AG04450 (cell line): ENCODE measurements at regions of chr16 and their contacts with region 1.

Region 1: GRCh38 chr16:23435500-23435899 is 17.5 kb downstream of the COG7 start:
- DNase-seq: no peak
- H3K4me3 ChIP-seq: no peak overlapping the region
- H3K27ac ChIP-seq: no peak overlapping the region
- H3K27me3 ChIP-seq: no peaks in the 10 kb centered on the region
- CTCF ChIP-seq: peak; percentile 91

Region 2: DNA sequence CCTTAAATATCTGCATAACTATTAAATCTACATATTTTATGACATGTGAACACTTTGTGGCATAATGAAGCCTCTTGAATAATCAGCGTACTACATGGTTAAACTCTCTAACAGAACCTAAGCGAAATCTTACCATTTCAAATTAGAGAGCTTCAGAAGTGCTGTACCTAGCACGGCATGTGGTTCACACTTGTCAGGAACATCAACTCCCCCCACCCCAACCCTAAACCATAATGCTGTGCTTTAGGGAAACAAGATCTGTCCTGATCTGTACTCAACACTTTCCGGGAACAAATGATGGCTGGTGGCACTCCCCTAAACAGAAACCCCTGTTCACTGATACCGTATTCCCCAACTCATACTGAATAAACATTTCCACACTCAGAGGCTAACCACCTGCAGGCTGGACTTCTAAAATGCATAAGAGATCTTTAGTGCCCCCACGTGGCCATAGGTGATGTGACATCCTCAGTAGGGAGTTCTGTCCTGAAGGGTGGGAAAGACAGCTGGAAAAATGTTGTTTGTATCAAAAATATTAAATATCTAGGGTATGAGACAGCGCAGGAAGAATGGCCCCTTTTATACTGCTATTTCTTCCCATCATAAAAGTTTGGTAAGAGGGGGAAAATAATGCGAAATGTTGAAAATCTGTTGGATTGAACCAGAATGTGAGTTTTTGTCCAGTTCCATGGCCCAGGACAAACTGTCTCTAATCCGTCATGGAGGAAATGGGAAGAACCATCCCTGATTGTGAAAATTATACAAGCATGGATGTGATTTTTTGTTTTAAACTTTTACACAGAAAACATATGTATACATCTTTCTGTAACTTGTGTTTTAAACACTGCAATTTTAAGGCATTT is 374.8 kb before region 1 on chr16:
- CTCF ChIA-PET with region 1: interaction called, 23 read pairs
- POLR2A ChIA-PET with region 1: no interaction called
- DNase-seq: peak; percentile 47
- H3K4me3 ChIP-seq: no peak overlapping the region
- H3K27ac ChIP-seq: no peak overlapping the region
- H3K27me3 ChIP-seq: no peaks in the 10 kb centered on the region
- CTCF ChIP-seq: peak; percentile 88

Region 3: DNA sequence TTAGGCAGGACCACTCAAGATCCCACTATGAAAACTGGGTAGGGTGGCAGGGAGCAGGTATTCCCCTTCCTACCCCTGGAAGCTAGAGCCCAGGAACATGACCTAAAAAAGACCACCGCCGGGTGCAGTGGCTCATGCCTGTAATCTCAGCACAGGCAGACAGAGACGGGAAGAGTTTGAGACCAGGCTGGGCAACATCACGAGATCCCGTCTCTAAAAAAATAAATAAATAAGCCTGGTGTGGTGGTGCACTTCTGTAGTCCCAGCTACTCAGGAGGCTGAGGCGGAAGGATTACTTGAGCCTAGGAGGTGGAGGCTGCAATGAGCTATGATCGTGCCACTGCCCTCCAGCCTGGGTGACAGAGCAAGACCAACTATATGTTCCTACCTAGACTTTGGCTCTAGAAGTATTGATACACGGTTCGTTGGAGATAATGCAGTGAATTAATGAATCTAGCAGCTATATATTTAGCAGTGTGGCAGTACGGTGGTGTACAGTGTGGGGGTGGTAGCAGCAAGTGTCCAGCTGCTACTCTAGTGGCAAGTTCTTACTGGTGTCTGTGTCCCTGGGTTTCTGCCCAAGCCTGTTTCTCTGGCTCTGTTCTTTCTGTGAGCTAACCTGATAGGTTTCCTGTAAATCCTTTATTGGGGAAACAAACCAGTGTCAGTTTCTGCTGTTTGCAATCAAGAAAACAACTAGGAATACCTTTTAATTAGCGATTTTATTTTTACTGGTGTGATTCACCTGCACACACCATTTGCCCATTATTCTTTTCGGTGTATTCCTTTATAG is 282.9 kb before region 1 on chr16:
- CTCF ChIA-PET with region 1: interaction called, 10 read pairs
- POLR2A ChIA-PET with region 1: no interaction called
- DNase-seq: no peak
- H3K4me3 ChIP-seq: no peak overlapping the region
- H3K27ac ChIP-seq: no peak overlapping the region
- H3K27me3 ChIP-seq: peaks cover 10% of the 10 kb centered on the region
- CTCF ChIP-seq: no peak

Region 4: GRCh38 chr16:23324730-23325129 is 110.8 kb before region 1 on chr16:
- CTCF ChIA-PET with region 1: interaction called, 10 read pairs
- POLR2A ChIA-PET with region 1: no interaction called
- DNase-seq: no peak
- H3K4me3 ChIP-seq: no peak overlapping the region
- H3K27ac ChIP-seq: no peak overlapping the region
- H3K27me3 ChIP-seq: no peaks in the 10 kb centered on the region
- CTCF ChIP-seq: no peak

Region 5: DNA sequence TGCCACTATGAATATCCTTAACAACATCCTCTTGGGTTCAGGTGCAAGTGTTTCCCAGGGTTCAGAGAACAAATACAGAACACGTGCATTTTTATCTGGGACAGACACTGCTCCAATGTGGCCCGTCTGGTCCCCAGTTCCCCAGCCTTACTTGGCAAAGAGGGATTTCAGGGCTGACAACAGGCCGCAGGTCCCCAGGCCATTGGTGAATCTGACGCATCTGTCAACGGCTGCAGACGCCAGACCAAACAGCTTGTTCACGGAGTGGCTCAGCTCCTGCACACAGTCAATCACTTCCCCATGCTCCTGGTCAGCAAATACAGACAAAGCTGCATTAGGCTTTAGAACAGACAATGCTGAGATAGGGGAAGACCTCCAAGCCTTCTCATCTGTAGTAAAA is 18.7 kb before region 1 on chr16:
- CTCF ChIA-PET with region 1: interaction called, 39 read pairs
- POLR2A ChIA-PET with region 1: no interaction called
- DNase-seq: no peak
- H3K4me3 ChIP-seq: no peak overlapping the region
- H3K27ac ChIP-seq: no peak overlapping the region
- H3K27me3 ChIP-seq: no peaks in the 10 kb centered on the region
- CTCF ChIP-seq: no peak